Pancreas (tissue), 10 donors: ENCODE measurements at regions of chr6 and their contacts with region 1.

Region 1: GRCh38 chr6:42547407-42548329 is 16.2 kb upstream of the UBR2 start:
- DNase-seq: peak; percentile 69 to 96 (median 82)
- ATAC-seq: peak; percentile 99 to 100 (median 100)
- H3K4me3 ChIP-seq: peak overlapping the region in 3 of 4 donors; percentile 24 to 44 (median 33)
- H3K27ac ChIP-seq: peak overlapping the region in 2 of 4 donors; percentile 10 to 35
- H3K4me1 ChIP-seq: peaks cover 0 to 7% (median 0%) of the 10 kb centered on the region in 3 donors
- H3K27me3 ChIP-seq: no peaks in the 10 kb centered on the region
- CTCF ChIP-seq: peak; percentile 94 to 97 (median 96)

Region 2: GRCh38 chr6:42251911-42252637 is 295.6 kb before region 1 on chr6:
- intact Hi-C with region 1: loop called in 1 of 3 experiments (anchors 10 kb)
- DNase-seq: peak; percentile 37 to 86 (median 76)
- ATAC-seq: peak; percentile 75 to 88 (median 80)
- H3K4me3 ChIP-seq: no peak overlapping the region
- H3K27ac ChIP-seq: peak overlapping the region in 2 of 4 donors; percentile 2 to 48
- H3K4me1 ChIP-seq: peaks cover 0 to 8% (median 4%) of the 10 kb centered on the region in 3 donors
- H3K27me3 ChIP-seq: no peaks in the 10 kb centered on the region
- CTCF ChIP-seq: no peak

Region 3: DNA sequence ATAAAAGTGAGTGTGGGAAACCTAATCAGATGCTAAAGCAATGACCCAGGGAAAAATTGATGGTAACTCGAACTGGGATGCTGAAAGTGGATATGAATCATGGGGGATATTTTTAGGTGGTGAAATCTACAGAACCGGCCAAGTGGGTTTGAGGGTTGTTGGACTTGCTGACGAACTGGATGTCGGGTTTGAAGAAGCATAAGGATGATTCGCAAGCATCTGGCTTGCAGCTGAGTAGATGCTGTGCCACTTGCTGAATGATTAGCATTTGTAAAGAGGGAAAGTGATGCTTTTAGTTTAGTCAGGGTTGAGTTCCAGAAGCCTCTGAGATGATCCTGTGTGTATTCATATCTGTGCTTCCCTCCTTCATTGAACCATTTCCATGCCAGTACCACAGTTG is 71.0 kb after region 1 on chr6:
- intact Hi-C with region 1: no loop called
- DNase-seq: no peak
- ATAC-seq: no peak
- H3K4me3 ChIP-seq: no peak overlapping the region
- H3K27ac ChIP-seq: no peak overlapping the region
- H3K4me1 ChIP-seq: no peaks in the 10 kb centered on the region
- H3K27me3 ChIP-seq: no peaks in the 10 kb centered on the region
- CTCF ChIP-seq: no peak

Region 4: DNA sequence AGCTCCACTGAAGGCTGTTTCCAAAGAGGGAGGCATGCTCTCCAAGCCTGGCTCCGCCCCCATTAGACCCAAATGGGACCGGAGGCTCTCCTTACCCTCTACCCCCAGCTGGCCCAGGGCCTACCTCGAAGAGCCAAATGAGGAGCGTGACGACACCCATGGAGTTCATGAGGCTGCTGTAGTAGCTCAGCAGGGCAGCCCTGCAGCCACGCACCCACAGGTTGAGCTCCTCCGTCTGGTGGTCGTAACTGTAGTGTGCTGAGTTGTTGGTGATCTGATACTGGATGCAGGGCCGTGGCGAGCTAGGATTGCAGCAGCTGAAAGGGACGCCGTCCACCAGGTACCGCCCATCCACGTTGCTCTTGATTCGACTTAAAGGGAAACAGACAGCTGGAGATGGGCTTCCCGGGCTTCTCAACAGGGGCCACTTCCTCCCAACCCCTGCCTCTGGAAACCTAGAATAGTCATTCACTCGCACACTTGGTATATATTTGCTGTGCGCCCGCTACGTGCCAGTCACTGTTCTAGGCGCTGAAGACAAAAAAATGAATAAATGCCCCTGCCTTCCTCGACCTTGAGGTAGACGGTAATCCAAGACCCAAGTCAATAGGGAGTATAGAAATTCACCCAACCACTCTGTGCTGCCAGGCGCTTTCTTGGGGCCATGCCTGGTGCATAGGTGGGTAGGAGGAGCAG is 156.7 kb after region 1 on chr6:
- intact Hi-C with region 1: no loop called
- DNase-seq: peak; percentile 29 to 68 (median 62)
- ATAC-seq: peak; percentile 83 to 87 (median 84)
- H3K4me3 ChIP-seq: peak overlapping the region; percentile 10 to 51 (median 32)
- H3K27ac ChIP-seq: peak overlapping the region in 1 of 4 donors; percentile 9
- H3K4me1 ChIP-seq: no peaks in the 10 kb centered on the region
- H3K27me3 ChIP-seq: no peaks in the 10 kb centered on the region
- CTCF ChIP-seq: no peak

Region 5: DNA sequence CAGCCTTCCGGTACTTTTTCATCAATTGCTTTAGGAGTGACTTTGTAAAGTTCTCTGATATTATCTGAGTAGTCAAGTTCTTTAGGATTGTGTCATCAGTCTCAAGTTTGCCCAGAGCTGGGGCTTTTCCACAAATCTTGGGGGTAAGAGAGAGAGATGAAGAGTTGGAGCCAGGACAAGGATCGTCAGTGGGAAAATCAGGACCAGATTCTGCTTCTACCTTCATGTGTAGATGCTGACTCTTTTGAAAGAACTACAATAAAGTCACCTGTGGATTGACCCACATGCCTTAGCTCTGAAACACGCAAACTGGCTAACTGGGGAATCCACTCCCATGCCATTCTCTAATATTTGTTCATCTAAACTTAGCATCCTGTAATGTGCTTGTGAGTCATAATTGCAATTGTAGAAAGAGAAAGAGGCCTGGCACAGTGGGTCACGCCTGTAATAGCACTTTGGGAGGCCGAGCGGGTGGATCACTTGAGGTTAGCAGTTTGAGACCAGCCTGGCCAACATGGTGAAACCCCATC is 218.5 kb after region 1 on chr6:
- intact Hi-C with region 1: no loop called
- DNase-seq: no peak
- ATAC-seq: no peak
- H3K4me3 ChIP-seq: no peak overlapping the region
- H3K27ac ChIP-seq: no peak overlapping the region
- H3K4me1 ChIP-seq: no peaks in the 10 kb centered on the region
- H3K27me3 ChIP-seq: no peaks in the 10 kb centered on the region
- CTCF ChIP-seq: no peak